Panc1 (cell line): ENCODE measurements at regions of chr12 and their contacts with region 1.

Region 1: DNA sequence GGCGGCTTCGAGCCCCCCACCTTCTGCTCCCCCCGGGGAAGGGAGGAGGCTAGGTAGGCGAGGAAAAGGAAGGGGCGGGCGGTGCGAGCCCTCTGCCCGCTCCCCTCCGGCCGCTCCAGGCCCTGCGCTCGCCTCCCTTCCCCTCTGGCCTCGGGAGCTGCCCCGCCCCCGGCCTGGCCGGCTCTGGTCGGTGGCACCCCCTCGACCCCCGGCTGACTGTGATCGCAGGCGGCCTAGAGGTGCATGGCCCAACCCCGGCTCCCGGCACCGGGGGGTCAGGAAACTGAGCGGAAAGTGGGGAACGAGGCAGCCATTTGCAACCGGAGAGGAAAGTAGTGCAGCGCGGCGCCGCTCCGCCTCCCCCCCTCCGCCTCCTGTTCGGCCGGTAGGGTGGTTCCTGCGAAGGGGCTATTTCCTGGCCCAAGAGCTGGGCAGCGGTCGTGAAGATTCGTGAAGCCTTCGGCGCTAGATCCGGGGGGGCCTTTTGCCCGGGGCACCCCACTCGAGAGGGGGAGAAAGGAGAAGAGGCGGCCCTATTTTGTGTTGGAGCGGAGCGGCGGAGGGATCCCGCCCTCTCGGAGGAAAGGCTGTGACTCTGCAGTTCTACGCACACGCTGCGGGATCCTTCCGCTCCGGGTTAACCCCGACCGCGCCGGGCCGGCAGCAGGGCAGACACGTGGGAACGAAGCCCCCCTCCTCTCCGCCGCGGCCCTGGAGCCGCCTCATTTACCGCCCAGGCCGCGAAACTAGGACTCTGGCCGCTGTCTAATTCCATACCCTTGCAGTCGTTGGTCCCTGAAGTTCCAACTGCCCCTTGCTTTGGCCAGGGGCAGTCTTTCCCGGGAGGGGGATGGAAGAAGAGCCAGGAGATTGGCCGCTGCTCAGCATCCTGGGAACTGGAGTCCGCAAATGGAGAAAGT is at the start of gene KMT2D:
- DNase-seq: peak; percentile 75
- ATAC-seq: peak; percentile 84
- H3K4me3 ChIP-seq: peak within 1 kb of the TSS; percentile 93 to 97
- H3K27ac ChIP-seq: peak within 1 kb of the TSS; percentile 84
- H3K4me1 ChIP-seq: peaks cover 30% of the 10 kb centered on the region
- H3K27me3 ChIP-seq: no peaks in the 10 kb centered on the region
- CTCF ChIP-seq: no peak
- total RNA-seq, gene KMT2D: 64.7 TPM

Region 2: DNA sequence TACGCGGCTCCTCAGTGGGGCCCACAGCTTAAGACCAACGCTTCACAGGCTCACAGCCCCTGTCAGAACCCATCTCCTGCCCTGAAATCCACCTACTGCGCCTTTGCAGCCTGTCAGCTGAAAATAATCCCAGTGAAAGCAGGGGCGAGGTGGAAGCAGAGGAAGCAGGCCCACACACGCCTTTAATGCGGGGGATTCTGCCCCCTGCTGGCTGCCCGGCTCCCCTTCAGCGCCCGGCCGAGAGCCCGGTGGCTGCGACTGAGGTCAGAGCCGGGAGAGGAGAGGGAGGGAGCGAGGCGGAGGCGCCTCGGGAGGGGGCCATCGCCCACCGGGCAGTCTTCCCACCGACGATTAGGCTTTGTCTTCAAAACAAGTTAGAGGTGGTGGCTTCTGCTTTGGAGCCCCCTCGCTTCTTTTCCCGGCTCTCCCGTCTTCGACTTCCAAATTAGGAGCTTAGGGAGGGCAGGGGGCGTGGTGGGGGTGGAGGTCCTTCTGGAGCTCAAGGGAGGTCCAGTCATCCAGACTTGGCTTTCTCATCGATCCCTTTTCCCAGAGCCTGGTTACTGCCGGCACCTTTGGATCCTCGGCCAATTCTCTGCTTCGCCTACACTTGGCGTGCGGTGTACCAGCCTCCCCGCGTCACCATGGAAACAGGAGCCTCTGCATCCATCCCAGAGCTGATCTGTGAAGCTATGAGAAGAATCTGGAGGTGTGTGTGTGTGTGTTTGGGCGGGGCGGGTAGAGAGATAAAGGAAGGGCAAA is 169.7 kb before region 1 on chr12:
- CTCF ChIA-PET with region 1: interaction called, 18 read pairs
- POLR2A ChIA-PET with region 1: no interaction called
- in situ Hi-C with region 1: no loop called
- intact Hi-C with region 1: no loop called
- DNase-seq: peak; percentile 35
- ATAC-seq: peak; percentile 99
- H3K4me3 ChIP-seq: peak overlapping the region; percentile 18 to 26; a peak in 2 of 4 replicates
- H3K27ac ChIP-seq: no peak overlapping the region
- H3K4me1 ChIP-seq: no peaks in the 10 kb centered on the region
- H3K27me3 ChIP-seq: peaks cover 4% of the 10 kb centered on the region
- CTCF ChIP-seq: peak; percentile 97

Region 3: DNA sequence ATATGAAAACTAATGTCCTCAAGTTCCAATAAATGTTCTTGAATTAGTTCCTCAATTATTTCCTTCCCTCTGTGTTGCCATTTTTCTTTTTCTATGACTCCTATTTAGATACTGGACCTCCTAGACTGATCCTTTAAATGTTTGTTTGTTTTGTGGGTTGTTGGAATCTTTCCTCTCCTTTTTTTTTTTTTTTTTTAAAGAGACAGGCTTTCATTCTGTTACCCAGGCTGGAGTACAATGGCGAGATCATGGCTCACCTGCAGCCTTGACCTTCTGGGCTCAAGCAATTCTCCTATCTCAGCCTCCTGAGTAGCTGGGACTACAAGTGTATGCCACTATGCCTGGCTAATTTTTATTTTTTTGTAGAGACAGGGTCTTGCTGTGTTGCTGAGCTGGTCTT is 51.6 kb before region 1 on chr12:
- CTCF ChIA-PET with region 1: no interaction called
- POLR2A ChIA-PET with region 1: interaction called, 10 read pairs
- in situ Hi-C with region 1: no loop called
- intact Hi-C with region 1: no loop called
- DNase-seq: no peak
- ATAC-seq: no peak; the same call in 1 of the 2 replicates
- H3K4me3 ChIP-seq: no peak overlapping the region
- H3K27ac ChIP-seq: no peak overlapping the region
- H3K4me1 ChIP-seq: no peaks in the 10 kb centered on the region
- H3K27me3 ChIP-seq: no peaks in the 10 kb centered on the region
- CTCF ChIP-seq: no peak

Region 4: DNA sequence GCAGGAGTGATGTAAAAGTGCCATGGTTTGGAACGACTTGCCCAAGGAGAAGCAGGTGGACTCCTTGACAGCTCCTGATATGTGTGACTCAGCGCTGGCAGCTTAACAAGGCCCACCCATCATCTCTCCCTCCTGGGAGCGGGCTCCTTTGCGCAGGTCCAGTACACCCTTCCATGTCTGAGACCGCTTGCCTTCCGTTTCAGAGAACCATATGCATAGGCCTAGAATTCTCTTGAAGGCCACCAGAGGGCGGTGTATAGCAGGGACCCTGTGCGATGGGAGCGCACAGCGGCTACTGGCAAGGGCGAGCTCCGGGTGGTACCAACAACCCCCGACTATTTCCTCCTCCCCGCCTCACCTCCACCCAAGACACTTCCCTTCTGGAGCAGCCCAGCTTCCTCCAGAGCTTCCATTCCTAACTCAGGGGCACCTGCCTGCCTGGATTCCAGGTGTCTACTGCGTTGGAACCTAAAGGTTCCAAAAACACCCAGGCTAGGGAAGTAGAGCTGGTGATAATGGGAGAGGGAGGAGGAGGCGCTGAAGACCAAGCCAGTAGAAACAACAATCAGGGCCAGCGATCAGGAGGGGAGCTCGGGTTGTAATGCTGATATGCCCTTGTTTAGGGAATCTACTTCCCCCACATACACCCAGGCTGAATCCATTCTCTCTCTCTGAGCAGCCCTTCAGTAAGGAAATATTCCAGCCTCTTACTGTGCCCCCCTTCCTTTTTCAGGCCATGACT is 27.9 kb after region 1 on chr12:
- CTCF ChIA-PET with region 1: interaction called, 10 read pairs
- POLR2A ChIA-PET with region 1: no interaction called
- in situ Hi-C with region 1: no loop called
- intact Hi-C with region 1: no loop called
- DNase-seq: peak; percentile 55
- ATAC-seq: peak; percentile 85
- H3K4me3 ChIP-seq: peak overlapping the region; percentile 13 to 37
- H3K27ac ChIP-seq: 0 out of 2 replicates have a peak overlapping the region, but pooled peaks have one; percentile 57
- H3K4me1 ChIP-seq: peaks cover 31% of the 10 kb centered on the region
- H3K27me3 ChIP-seq: no peaks in the 10 kb centered on the region
- CTCF ChIP-seq: peak; percentile 94

Region 5: GRCh38 chr12:49098035-49098451 is 37.5 kb after region 1 on chr12:
- CTCF ChIA-PET with region 1: interaction called, 22 read pairs
- POLR2A ChIA-PET with region 1: interaction called, 3 read pairs
- in situ Hi-C with region 1: no loop called
- intact Hi-C with region 1: no loop called
- DNase-seq: peak; percentile 38
- ATAC-seq: peak; percentile 41; the same call in 1 of the 2 replicates
- H3K4me3 ChIP-seq: no peak overlapping the region
- H3K27ac ChIP-seq: no peak overlapping the region
- H3K4me1 ChIP-seq: peaks cover 11% of the 10 kb centered on the region
- H3K27me3 ChIP-seq: no peaks in the 10 kb centered on the region
- CTCF ChIP-seq: peak; percentile 92

Region 6: GRCh38 chr12:49121047-49121696 is 60.7 kb after region 1 on chr12:
- CTCF ChIA-PET with region 1: interaction called, 16 read pairs
- POLR2A ChIA-PET with region 1: no interaction called
- in situ Hi-C with region 1: no loop called
- intact Hi-C with region 1: loop called (anchors 5 kb)
- DNase-seq: peak; percentile 72
- ATAC-seq: peak; percentile 94
- H3K4me3 ChIP-seq: no peak overlapping the region
- H3K27ac ChIP-seq: no peak overlapping the region
- H3K4me1 ChIP-seq: no peaks in the 10 kb centered on the region
- H3K27me3 ChIP-seq: no peaks in the 10 kb centered on the region
- CTCF ChIP-seq: peak; percentile 85

Region 7: GRCh38 chr12:49146406-49146805 is 85.9 kb after region 1 on chr12:
- CTCF ChIA-PET with region 1: no interaction called
- POLR2A ChIA-PET with region 1: no interaction called
- in situ Hi-C with region 1: no loop called
- intact Hi-C with region 1: no loop called
- DNase-seq: no peak
- ATAC-seq: no peak
- H3K4me3 ChIP-seq: no peak overlapping the region
- H3K27ac ChIP-seq: no peak overlapping the region
- H3K4me1 ChIP-seq: no peaks in the 10 kb centered on the region
- H3K27me3 ChIP-seq: no peaks in the 10 kb centered on the region
- CTCF ChIP-seq: no peak

Region 8: DNA sequence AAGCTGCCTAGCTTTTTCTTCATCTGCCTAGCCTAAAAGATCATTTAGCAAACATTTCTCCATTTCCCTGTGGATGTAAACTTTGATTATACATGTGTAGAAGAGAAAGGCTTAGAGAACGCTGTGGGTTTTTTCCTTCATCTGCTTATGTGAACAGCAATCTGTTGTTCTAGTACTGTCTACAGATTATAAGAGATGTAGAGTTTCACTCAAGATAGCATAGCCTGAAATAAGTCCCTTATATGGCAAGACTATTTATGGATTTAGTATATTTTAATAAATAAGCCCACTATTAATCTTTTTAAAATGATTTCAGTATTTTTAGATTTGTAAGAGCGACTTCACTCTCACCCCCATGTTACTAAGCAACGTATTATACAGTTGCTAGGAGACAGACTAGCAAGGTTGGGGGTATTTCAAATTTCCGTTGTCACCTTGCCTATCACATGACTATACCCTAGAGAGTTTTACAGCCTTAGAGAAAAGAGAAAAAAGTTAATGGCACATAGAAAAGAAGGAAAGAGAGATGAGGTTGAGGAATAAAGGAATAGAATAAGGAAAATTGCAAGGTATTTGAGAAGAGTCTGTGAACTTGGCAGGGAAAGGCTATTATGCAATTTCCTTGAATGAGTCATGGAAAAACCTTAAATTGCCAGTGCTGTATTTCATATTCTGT is 140.6 kb after region 1 on chr12:
- CTCF ChIA-PET with region 1: no interaction called
- POLR2A ChIA-PET with region 1: no interaction called
- in situ Hi-C with region 1: no loop called
- intact Hi-C with region 1: no loop called
- DNase-seq: peak; percentile 85
- ATAC-seq: peak; percentile 82
- H3K4me3 ChIP-seq: no peak overlapping the region; a peak in 1 of 4 replicates
- H3K27ac ChIP-seq: peak overlapping the region; percentile 45; the same call in 1 of the 2 replicates
- H3K4me1 ChIP-seq: peaks cover 11% of the 10 kb centered on the region; the same call in 1 of the 2 replicates
- H3K27me3 ChIP-seq: no peaks in the 10 kb centered on the region
- CTCF ChIP-seq: no peak